ENCODE measurements at regions of chr2 and their contacts with region 1.

Region 1: DNA sequence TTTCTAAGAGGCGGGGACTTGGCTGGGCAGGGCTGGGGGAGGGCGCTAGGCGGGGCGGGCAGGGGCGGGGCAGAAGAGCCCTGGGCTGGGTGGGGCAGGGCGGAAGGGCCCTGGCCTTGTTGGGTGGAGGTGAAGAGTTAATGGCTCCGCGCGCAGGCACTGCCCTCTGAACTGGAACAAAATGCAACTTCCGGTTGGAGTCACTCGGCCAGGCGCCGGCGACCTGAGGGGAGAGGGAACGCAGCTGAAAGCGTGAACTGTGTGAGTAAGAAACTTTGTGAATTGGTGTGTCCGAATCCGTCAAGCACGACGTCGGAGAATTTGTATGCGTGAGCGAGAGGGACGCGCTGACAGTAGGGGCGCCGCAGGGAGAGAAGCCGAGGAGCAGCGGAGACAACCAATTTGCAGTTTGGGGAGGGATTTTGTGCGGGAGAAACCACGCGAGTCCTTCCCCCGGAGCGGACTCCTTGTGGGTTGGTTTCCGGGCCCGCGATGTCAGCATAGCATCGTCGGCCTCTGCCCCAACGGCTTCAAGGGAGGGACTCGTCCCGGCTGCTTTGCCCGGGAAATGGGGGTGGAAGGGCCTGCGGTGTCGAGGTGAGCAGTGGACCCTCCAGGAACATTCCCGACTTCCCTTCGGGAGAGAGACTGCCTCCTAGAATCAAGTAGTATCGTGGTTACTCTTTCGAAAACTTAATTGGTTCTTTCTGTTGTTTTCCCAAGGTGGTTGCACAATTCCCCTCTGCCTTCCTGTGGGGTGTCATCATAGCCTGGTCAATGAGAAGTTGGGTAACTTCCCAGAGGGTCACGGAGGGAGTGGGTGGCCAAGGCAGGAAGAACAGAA is at the start of gene TANK:
- DNase-seq: peak; percentile 86 to 95
- ATAC-seq: peak; percentile 92 to 94
- H3K4me3 ChIP-seq: peak within 1 kb of the TSS; percentile 81 to 98 (median 91)
- H3K27ac ChIP-seq: peak within 1 kb of the TSS; percentile 90 to 99 (median 96)
- H3K4me1 ChIP-seq: peaks cover 43 to 44% of the 10 kb centered on the region in 2 donors
- H3K27me3 ChIP-seq: no peaks in the 10 kb centered on the region
- CTCF ChIP-seq: no peak
- POLR2A ChIP-seq: peak; percentile 99
- total RNA-seq, gene TANK: 70.3 to 103 (median 86.0) TPM

Region 2: GRCh38 chr2:159855557-159856061 is 1304.8 kb before region 1 on chr2:
- in situ Hi-C with region 1: no loop called
- intact Hi-C with region 1: no loop called
- DNase-seq: no peak
- ATAC-seq: no peak
- H3K4me3 ChIP-seq: no peak overlapping the region
- H3K27ac ChIP-seq: no peak overlapping the region
- H3K4me1 ChIP-seq: no peaks in the 10 kb centered on the region
- H3K27me3 ChIP-seq: no peaks in the 10 kb centered on the region
- CTCF ChIP-seq: no peak
- POLR2A ChIP-seq: no peak

Region 3: DNA sequence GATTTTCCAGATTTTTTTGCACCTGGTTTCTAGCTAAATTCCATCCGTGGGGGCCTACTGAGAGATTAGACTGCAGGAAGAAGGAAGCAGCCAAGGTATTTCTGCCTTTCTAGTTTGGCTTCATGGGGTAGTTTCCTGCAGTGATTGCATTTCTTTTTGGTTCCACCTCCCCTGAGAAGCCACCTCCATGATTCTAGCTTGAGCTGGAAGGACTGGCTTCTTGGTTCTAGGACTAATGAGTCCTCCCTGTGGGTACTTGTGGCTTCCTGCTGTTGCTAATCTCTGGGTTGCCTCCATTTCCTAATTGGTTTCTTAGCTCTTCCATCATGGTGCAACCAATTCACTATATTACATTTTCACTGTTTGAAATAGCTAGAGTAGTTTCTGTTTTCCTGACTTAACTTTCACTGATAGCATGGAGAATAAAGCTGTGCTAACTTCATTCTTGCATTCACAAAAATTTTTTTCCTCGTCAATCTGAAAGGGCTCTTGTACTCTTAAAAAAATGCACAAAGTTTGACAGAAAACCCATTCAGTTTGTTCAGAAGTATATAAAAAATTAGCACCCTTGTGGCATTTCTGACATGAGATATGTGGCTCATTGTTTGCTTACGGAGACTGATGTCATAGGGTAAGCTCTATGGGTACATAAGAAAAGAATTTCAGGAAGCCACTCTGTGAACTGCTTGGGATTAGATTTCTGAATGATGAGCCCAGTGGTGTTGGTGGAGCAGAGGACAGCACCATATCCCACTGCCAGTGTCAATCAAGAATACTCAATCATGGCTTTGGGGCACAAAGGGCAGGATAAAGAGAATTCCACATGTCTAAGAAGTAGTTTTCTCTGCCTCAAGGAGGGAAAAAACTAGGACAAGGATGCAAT is 424.1 kb before region 1 on chr2:
- in situ Hi-C with region 1: no loop called
- intact Hi-C with region 1: no loop called
- DNase-seq: no peak
- ATAC-seq: no peak
- H3K4me3 ChIP-seq: no peak overlapping the region
- H3K27ac ChIP-seq: no peak overlapping the region
- H3K4me1 ChIP-seq: no peaks in the 10 kb centered on the region
- H3K27me3 ChIP-seq: no peaks in the 10 kb centered on the region
- CTCF ChIP-seq: no peak
- POLR2A ChIP-seq: no peak

Region 4: DNA sequence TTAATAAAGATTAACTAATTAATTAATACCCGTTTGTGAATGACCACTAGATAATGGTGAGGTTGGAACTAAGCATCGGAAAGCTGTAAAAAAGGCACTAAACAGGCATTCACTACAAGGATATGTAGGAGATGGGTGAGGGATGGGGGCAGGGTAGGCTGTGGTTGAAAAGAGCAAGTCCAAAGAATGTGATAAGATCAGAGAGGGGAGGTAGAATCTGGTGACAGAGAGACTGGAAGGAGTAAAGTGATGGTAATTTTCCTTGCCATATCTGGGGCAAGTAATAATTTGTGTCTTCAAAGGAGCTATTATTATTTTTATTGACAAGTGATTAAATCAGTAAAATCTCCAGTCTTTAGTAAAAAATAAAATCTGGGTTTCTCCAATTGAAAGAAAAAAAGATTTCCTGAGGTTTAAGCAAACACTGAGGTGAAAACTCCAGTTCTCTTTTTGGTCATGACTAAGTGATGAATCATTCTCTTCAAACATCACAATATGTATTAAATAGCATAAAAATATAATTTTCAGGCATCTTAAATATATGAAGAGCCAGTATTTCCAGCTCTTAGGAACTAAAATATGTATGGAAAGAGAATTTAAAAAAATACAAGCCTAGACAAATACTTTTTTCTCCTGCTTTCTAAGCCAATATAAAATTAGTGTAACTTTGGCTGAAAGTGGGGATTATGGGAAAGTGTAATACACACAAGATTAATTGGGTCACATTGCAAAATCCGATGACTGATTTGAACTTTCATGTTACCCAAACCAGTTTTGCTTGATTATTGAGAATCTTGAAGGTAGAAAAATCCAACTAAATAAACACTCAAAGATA is 407.7 kb before region 1 on chr2:
- in situ Hi-C with region 1: no loop called
- intact Hi-C with region 1: no loop called
- DNase-seq: no peak
- ATAC-seq: no peak
- H3K4me3 ChIP-seq: no peak overlapping the region
- H3K27ac ChIP-seq: no peak overlapping the region
- H3K4me1 ChIP-seq: no peaks in the 10 kb centered on the region
- H3K27me3 ChIP-seq: peaks cover 0 to 2% (median 0%) of the 10 kb centered on the region in 3 donors
- CTCF ChIP-seq: no peak
- POLR2A ChIP-seq: no peak

Region 5: GRCh38 chr2:161112908-161113307 is 47.5 kb before region 1 on chr2:
- in situ Hi-C with region 1: no loop called
- intact Hi-C with region 1: no loop called
- DNase-seq: no peak
- ATAC-seq: no peak
- H3K4me3 ChIP-seq: no peak overlapping the region
- H3K27ac ChIP-seq: no peak overlapping the region
- H3K4me1 ChIP-seq: no peaks in the 10 kb centered on the region
- H3K27me3 ChIP-seq: no peaks in the 10 kb centered on the region
- CTCF ChIP-seq: no peak
- POLR2A ChIP-seq: no peak

Region 6: GRCh38 chr2:161122772-161123530 is 37.5 kb before region 1 on chr2:
- in situ Hi-C with region 1: no loop called
- intact Hi-C with region 1: loop called (anchors 2 kb)
- DNase-seq: peak; percentile 25 to 31
- ATAC-seq: peak; percentile 97 to 98
- H3K4me3 ChIP-seq: peak overlapping the region in 2 of 4 donors; percentile 8 to 19
- H3K27ac ChIP-seq: peak overlapping the region; percentile 47 to 50 (median 50)
- H3K4me1 ChIP-seq: peaks cover 13 to 21% of the 10 kb centered on the region in 2 donors
- H3K27me3 ChIP-seq: no peaks in the 10 kb centered on the region
- CTCF ChIP-seq: no peak
- POLR2A ChIP-seq: no peak

Region 7: GRCh38 chr2:161199912-161200701 is 39.7 kb after region 1 on chr2:
- in situ Hi-C with region 1: no loop called
- intact Hi-C with region 1: loop called (anchors 1 kb)
- DNase-seq: no peak
- ATAC-seq: no peak
- H3K4me3 ChIP-seq: no peak overlapping the region
- H3K27ac ChIP-seq: no peak overlapping the region
- H3K4me1 ChIP-seq: peaks cover 3 to 8% of the 10 kb centered on the region in 2 donors
- H3K27me3 ChIP-seq: no peaks in the 10 kb centered on the region
- CTCF ChIP-seq: no peak
- POLR2A ChIP-seq: no peak

Region 8: GRCh38 chr2:161308178-161308955 is 147.9 kb after region 1 on chr2 and contains the start of gene PSMD14:
- in situ Hi-C with region 1: no loop called
- intact Hi-C with region 1: loop called (anchors 5 kb)
- DNase-seq: peak; percentile 90 to 92
- ATAC-seq: peak; percentile 98 to 99
- H3K4me3 ChIP-seq: peak within 1 kb of the TSS; percentile 67 to 96 (median 85)
- H3K27ac ChIP-seq: peak within 1 kb of the TSS; percentile 83 to 92 (median 86)
- H3K4me1 ChIP-seq: peaks cover 15 to 16% of the 10 kb centered on the region in 2 donors
- H3K27me3 ChIP-seq: no peaks in the 10 kb centered on the region
- CTCF ChIP-seq: no peak
- POLR2A ChIP-seq: peak; percentile 74 to 81
- total RNA-seq, gene PSMD14: 138 to 195 (median 163) TPM